Heart left ventricle (tissue), 16 donors: ENCODE measurements at regions of chr3 and their contacts with region 1.

Region 1: GRCh38 chr3:12967606-12968351 is 105.5 kb downstream of the IQSEC1 start:
- DNase-seq: peak; percentile 92 to 96 (median 94)
- ATAC-seq: peak; percentile 88 to 94 (median 92)
- H3K4me3 ChIP-seq: peak overlapping the region; percentile 59 to 98 (median 82)
- H3K27ac ChIP-seq: peak overlapping the region; percentile 49 to 94 (median 82)
- H3K4me1 ChIP-seq: peaks cover 14 to 86% (median 71%) of the 10 kb centered on the region in 12 donors
- H3K27me3 ChIP-seq: no peaks in the 10 kb centered on the region
- CTCF ChIP-seq: peak in 1 of 12 donors; percentile 12
- POLR2A ChIP-seq: peak; percentile 21 to 54

Region 2: GRCh38 chr3:12436514-12437220 is 531.1 kb before region 1 on chr3:
- intact Hi-C with region 1: no loop called
- DNase-seq: no peak
- ATAC-seq: peak in 1 of 4 donors; percentile 17
- H3K4me3 ChIP-seq: no peak overlapping the region
- H3K27ac ChIP-seq: peak overlapping the region in 3 of 12 donors; percentile 16 to 43 (median 27)
- H3K4me1 ChIP-seq: peaks cover 0 to 33% (median 16%) of the 10 kb centered on the region in 12 donors
- H3K27me3 ChIP-seq: no peaks in the 10 kb centered on the region
- CTCF ChIP-seq: no peak
- POLR2A ChIP-seq: no peak

Region 3: GRCh38 chr3:12815719-12816118 is 152.1 kb before region 1 on chr3:
- intact Hi-C with region 1: no loop called
- DNase-seq: no peak
- ATAC-seq: no peak
- H3K4me3 ChIP-seq: no peak overlapping the region
- H3K27ac ChIP-seq: no peak overlapping the region
- H3K4me1 ChIP-seq: peaks cover 0 to 21% (median 4%) of the 10 kb centered on the region in 12 donors
- H3K27me3 ChIP-seq: no peaks in the 10 kb centered on the region
- CTCF ChIP-seq: no peak
- POLR2A ChIP-seq: no peak

Region 4: DNA sequence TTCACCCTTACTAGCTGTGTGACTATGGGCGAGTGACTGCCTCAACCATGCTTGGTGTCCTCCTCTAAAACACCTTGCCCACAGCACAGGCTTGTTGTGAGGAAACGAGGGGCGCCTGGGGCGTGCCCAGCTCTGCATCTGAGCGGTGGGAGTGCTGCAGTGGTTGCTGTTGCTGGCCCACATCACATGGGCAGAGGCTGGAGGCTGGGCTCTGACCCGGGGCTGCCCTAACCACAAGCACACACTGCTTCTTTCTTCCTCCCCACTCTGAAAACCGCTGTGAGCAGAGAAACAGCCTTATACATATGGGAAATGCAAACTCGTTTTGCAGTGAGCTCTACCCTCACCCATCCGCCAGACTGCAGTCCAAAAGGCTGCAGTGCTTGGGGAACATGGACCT is 51.6 kb before region 1 on chr3:
- intact Hi-C with region 1: loop called in 1 of 10 experiments (anchors 10 kb)
- DNase-seq: no peak
- ATAC-seq: no peak
- H3K4me3 ChIP-seq: no peak overlapping the region
- H3K27ac ChIP-seq: no peak overlapping the region
- H3K4me1 ChIP-seq: peaks cover 0 to 23% (median 0%) of the 10 kb centered on the region in 12 donors
- H3K27me3 ChIP-seq: no peaks in the 10 kb centered on the region
- CTCF ChIP-seq: no peak
- POLR2A ChIP-seq: no peak

Region 5: GRCh38 chr3:12934431-12934830 is 33.3 kb before region 1 on chr3:
- intact Hi-C with region 1: loop called in 8 of 10 experiments (anchors 2 to 5 kb)
- DNase-seq: peak; percentile 78 to 92 (median 83)
- ATAC-seq: peak in 3 of 4 donors; percentile 49 to 69 (median 67)
- H3K4me3 ChIP-seq: peak overlapping the region in 1 of 12 donors; percentile 12
- H3K27ac ChIP-seq: peak overlapping the region; percentile 21 to 89 (median 78)
- H3K4me1 ChIP-seq: peaks cover 43 to 99% (median 87%) of the 10 kb centered on the region in 12 donors
- H3K27me3 ChIP-seq: no peaks in the 10 kb centered on the region
- CTCF ChIP-seq: no peak
- POLR2A ChIP-seq: peak in 1 of 2 donors; percentile 28